Adrenal gland (tissue), 19 donors: ENCODE measurements at regions of chr11 and their contacts with region 1.

Region 1: GRCh38 chr11:72430741-72431570 is 3.4 kb downstream of the CLPB start:
- DNase-seq: peak in 6 of 7 donors; percentile 41 to 74 (median 54)
- H3K4me3 ChIP-seq: no peak overlapping the region
- H3K27ac ChIP-seq: no peak overlapping the region
- H3K4me1 ChIP-seq: peaks cover 5 to 27% of the 10 kb centered on the region in 2 donors
- H3K27me3 ChIP-seq: no peaks in the 10 kb centered on the region
- CTCF ChIP-seq: peak; percentile 59 to 84 (median 76)
- POLR2A ChIP-seq: no peak

Region 2: DNA sequence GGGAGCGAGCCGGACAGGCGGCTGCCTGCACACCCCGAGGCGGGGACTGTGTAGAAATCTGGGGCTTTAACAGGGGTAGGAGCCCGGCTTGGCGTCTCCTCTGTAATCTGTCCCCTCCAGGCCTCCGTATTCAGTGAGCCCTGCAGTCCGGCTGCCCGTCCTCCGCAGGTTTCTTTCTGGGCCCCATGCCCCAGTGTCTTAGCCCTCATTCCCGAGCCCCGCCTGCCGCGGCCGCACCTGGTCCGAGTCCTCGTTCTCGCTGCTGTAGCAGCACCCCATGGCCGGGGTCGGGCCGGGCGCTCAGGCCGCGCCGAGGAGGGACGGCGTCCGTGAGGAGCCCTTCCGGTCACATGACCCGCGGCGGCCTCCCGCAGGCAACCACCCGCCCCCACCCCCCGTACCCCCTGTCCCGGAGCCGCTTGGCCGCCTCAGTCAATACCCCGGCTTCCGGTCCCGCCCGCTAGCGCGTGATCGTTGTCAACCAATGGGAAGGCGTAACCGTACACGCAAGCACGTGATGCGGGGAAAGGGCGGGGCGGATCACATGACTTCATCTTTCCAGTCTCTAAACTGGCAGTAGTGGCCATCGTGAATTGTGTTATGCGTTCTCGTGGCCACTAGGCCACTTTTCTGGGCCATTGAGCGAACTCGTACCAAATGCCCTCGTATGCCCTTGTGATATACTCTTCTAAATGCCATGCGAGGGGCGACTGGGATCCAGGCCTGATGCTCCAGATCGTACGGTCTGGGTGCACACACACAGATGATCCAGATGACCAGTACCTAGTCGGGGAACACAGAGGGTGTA is 327.8 kb before region 1 on chr11 and contains the start of gene LAMTOR1:
- intact Hi-C with region 1: loop called in 1 of 2 experiments (anchors 10 kb)
- DNase-seq: peak; percentile 99 to 100 (median 100)
- H3K4me3 ChIP-seq: peak within 1 kb of the TSS; percentile 58 to 91 (median 82)
- H3K27ac ChIP-seq: peak within 1 kb of the TSS in 4 of 5 donors; percentile 83 to 95 (median 92)
- H3K4me1 ChIP-seq: peaks cover 35 to 41% of the 10 kb centered on the region in 2 donors
- H3K27me3 ChIP-seq: no peaks in the 10 kb centered on the region
- CTCF ChIP-seq: peak; percentile 19 to 80 (median 58)
- POLR2A ChIP-seq: peak; percentile 65 to 78
- total RNA-seq, gene LAMTOR1: 107 to 297 (median 145) TPM

Region 3: GRCh38 chr11:72483412-72484186 is 52.6 kb after region 1 on chr11:
- intact Hi-C with region 1: no loop called
- DNase-seq: peak in 4 of 7 donors; percentile 27 to 47 (median 38)
- H3K4me3 ChIP-seq: no peak overlapping the region
- H3K27ac ChIP-seq: peak overlapping the region in 3 of 5 donors; percentile 16 to 84 (median 74)
- H3K4me1 ChIP-seq: no peaks in the 10 kb centered on the region
- H3K27me3 ChIP-seq: no peaks in the 10 kb centered on the region
- CTCF ChIP-seq: peak in 1 of 6 experiments; percentile 23
- POLR2A ChIP-seq: no peak